ENCODE measurements at regions of chr9 and their contacts with region 1.

Region 1: DNA sequence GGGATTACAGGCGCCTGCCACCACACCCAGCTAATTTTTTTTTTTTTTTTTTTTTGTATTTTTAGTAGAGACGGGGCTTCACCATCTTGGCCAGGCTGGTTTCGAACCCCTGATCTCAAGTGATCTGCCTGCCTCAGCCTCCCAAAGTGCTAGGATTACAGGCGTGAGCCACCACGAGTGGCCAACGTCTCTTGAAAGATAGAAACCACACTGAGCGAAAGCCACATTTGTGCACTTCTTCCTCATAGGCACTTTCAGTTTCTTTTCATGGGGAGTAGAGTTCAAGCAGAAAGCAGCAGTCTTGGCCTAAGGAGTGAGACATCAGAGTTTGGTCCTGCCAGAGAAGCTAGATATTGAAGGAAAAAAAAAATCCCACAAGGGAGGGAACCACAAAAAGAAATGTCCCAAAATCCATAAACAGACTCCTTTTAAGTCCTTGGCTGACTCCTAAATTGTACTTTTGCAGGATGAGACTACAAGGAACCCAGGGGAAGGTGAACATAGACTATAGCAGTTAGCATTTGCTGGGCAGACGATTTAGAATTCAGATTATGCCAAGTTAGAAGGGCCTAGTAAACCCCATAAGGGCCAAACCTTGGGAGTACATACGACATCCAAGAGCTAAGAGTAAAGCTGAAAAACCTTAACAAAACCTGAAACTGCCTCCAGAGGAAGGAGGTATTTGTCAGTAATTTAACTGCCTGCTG is 43.9 kb upstream of the GLIPR2 start:
- DNase-seq: no peak
- H3K4me3 ChIP-seq: no peak overlapping the region
- H3K27ac ChIP-seq: no peak overlapping the region
- H3K4me1 ChIP-seq: no peaks in the 10 kb centered on the region
- H3K27me3 ChIP-seq: no peaks in the 10 kb centered on the region
- CTCF ChIP-seq: no peak

Region 2: GRCh38 chr9:35835216-35835632 is 257.4 kb before region 1 on chr9:
- CTCF ChIA-PET with region 1: no interaction called
- POLR2A ChIA-PET with region 1: no interaction called
- intact Hi-C with region 1: no loop called
- DNase-seq: no peak
- H3K4me3 ChIP-seq: no peak overlapping the region
- H3K27ac ChIP-seq: no peak overlapping the region
- H3K4me1 ChIP-seq: peaks cover 12% of the 10 kb centered on the region
- H3K27me3 ChIP-seq: no peaks in the 10 kb centered on the region
- CTCF ChIP-seq: no peak; the same call in 1 of the 2 replicates

Region 3: DNA sequence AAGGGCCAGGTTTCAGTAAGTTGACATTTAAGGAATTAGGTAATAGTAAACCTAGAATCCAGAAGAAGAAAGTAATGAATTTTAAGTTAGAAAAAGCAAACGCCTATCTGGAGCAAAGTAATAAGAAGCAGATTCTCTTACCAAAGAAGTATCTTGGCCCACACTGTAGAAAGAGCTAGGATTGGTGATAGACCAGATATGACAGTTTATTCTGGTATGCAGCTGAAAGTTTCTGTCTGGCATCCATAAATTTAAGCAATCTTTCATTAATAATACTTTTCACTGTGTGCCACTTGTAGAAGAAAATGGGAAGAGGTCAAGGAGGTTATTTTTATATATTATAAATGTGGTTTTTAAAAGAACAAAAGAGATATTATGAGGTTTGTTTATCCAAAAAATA is 53.0 kb before region 1 on chr9:
- CTCF ChIA-PET with region 1: no interaction called
- POLR2A ChIA-PET with region 1: no interaction called
- intact Hi-C with region 1: loop called (anchors 10 kb)
- DNase-seq: no peak
- H3K4me3 ChIP-seq: no peak overlapping the region
- H3K27ac ChIP-seq: no peak overlapping the region; the same call in 1 of the 2 replicates
- H3K4me1 ChIP-seq: peaks cover 19% of the 10 kb centered on the region
- H3K27me3 ChIP-seq: no peaks in the 10 kb centered on the region
- CTCF ChIP-seq: no peak

Region 4: GRCh38 chr9:36132086-36132485 is 39.4 kb after region 1 on chr9:
- CTCF ChIA-PET with region 1: no interaction called
- POLR2A ChIA-PET with region 1: no interaction called
- intact Hi-C with region 1: loop called (anchors 1 kb)
- DNase-seq: peak in 1 of 2 experiments; percentile 60
- H3K4me3 ChIP-seq: no peak overlapping the region
- H3K27ac ChIP-seq: peak overlapping the region; percentile 74
- H3K4me1 ChIP-seq: peaks cover 18% of the 10 kb centered on the region; the same call in 1 of the 2 replicates
- H3K27me3 ChIP-seq: no peaks in the 10 kb centered on the region
- CTCF ChIP-seq: no peak